ENCODE measurements at regions of chr21 and their contacts with region 1.

Region 1: DNA sequence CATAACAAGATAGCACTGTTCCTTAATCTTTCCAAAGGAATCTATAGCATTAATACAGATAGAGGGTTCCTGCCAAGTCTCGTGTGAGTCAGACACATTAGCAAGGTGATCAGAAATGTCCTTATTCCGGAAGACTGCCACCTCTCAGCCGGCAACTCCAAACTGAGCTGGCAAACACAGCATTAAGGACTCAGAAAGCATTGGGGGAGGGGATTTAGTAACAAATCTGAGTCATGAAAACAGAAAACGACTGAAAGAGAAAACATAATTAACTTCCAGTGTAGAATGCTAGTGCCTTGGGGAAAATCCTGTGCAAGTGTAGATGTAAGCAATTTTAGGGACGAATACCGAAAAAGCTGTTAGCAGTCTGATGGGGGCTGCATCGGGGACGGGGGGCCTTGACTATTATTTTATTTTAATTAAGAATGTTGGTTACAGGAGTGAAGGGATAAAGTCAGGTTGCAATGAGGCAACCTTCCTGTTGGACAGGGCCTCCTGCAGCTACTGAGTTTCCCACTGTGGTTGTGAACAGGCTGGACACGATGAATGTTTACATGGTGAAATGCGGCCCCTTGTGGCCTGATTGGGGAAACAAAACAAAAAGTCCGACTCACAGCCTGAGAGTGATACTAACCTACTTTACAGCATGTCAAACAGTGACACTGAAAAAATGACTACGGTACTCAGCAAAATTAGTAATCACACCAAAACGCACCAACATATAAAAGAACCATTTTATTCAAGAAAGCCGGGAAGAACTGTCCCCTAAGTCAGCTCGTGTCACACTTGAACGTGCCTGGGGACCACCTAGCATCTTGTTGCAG is 20.7 kb downstream of the MIS18A start:
- DNase-seq: peak in 3 of 9 donors; percentile 5 to 33 (median 8)
- ATAC-seq: peak; percentile 40
- H3K4me3 ChIP-seq: no peak overlapping the region
- H3K4me3 Mint-ChIP-seq: no peak overlapping the region
- H3K27ac ChIP-seq: no peak overlapping the region
- H3K27ac Mint-ChIP-seq: no peak overlapping the region
- H3K4me1 ChIP-seq: no peaks in the 10 kb centered on the region
- H3K4me1 Mint-ChIP-seq: peaks cover 0 to 2% (median 0%) of the 10 kb centered on the region in 7 donors
- H3K27me3 ChIP-seq: no peaks in the 10 kb centered on the region
- H3K27me3 Mint-ChIP-seq: peaks cover 0 to 12% (median 3%) of the 10 kb centered on the region in 5 donors

Region 2: GRCh38 chr21:31781737-31782136 is 476.4 kb before region 1 on chr21:
- CTCF ChIA-PET with region 1: interaction called, 3 read pairs
- POLR2A ChIA-PET with region 1: no interaction called
- intact Hi-C with region 1: loop called in 1 of 2 experiments (anchors 2 kb)
- DNase-seq: no peak
- ATAC-seq: no peak
- H3K4me3 ChIP-seq: no peak overlapping the region
- H3K4me3 Mint-ChIP-seq: no peak overlapping the region
- H3K27ac ChIP-seq: no peak overlapping the region
- H3K27ac Mint-ChIP-seq: no peak overlapping the region
- H3K4me1 ChIP-seq: no peaks in the 10 kb centered on the region
- H3K4me1 Mint-ChIP-seq: peaks cover 3 to 11% (median 4%) of the 10 kb centered on the region in 7 donors
- H3K27me3 ChIP-seq: no peaks in the 10 kb centered on the region
- H3K27me3 Mint-ChIP-seq: peaks cover 0 to 17% (median 13%) of the 10 kb centered on the region in 5 donors

Region 3: GRCh38 chr21:31866077-31866511 is 392.1 kb before region 1 on chr21:
- CTCF ChIA-PET with region 1: no interaction called
- POLR2A ChIA-PET with region 1: no interaction called
- intact Hi-C with region 1: loop called in 1 of 2 experiments (anchors 1 kb)
- DNase-seq: peak; percentile 16 to 70 (median 47)
- ATAC-seq: peak; percentile 72
- H3K4me3 ChIP-seq: no peak overlapping the region
- H3K4me3 Mint-ChIP-seq: no peak overlapping the region
- H3K27ac ChIP-seq: no peak overlapping the region
- H3K27ac Mint-ChIP-seq: no peak overlapping the region
- H3K4me1 ChIP-seq: no peaks in the 10 kb centered on the region
- H3K4me1 Mint-ChIP-seq: no peaks in the 10 kb centered on the region
- H3K27me3 ChIP-seq: no peaks in the 10 kb centered on the region
- H3K27me3 Mint-ChIP-seq: peaks cover 13 to 30% (median 23%) of the 10 kb centered on the region in 5 donors

Region 4: DNA sequence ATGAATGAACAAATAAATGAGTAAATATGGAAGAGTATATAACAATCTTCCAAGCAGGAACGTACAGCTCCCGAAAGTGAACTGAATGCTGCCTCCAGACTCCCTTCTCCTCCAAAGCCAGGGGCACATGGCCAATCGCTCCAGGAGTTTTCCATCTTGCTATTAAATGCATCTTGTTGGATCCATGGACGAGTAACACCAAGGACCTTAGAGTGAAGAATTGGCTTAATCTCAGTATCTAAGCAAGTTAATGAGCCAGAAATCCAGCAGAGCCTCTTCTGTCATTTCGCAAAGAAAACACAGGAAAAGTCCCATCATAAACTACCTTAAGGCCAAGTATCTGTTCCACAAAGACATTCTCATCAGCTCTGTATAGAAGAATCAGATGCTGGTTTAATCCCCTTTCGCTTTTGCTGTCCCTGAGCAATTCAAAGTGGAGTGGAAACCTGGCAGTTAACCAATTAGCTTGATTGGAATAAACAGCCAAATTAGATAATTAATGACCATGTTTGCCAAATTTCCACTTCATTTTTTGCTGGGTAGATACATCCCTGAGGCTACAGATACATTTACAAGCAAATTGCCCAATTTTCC is 95.3 kb before region 1 on chr21:
- CTCF ChIA-PET with region 1: no interaction called
- POLR2A ChIA-PET with region 1: no interaction called
- intact Hi-C with region 1: no loop called
- DNase-seq: no peak
- ATAC-seq: no peak
- H3K4me3 ChIP-seq: no peak overlapping the region
- H3K4me3 Mint-ChIP-seq: no peak overlapping the region
- H3K27ac ChIP-seq: no peak overlapping the region
- H3K27ac Mint-ChIP-seq: no peak overlapping the region
- H3K4me1 ChIP-seq: no peaks in the 10 kb centered on the region
- H3K4me1 Mint-ChIP-seq: no peaks in the 10 kb centered on the region
- H3K27me3 ChIP-seq: no peaks in the 10 kb centered on the region
- H3K27me3 Mint-ChIP-seq: peaks cover 16 to 61% (median 53%) of the 10 kb centered on the region in 5 donors

Region 5: DNA sequence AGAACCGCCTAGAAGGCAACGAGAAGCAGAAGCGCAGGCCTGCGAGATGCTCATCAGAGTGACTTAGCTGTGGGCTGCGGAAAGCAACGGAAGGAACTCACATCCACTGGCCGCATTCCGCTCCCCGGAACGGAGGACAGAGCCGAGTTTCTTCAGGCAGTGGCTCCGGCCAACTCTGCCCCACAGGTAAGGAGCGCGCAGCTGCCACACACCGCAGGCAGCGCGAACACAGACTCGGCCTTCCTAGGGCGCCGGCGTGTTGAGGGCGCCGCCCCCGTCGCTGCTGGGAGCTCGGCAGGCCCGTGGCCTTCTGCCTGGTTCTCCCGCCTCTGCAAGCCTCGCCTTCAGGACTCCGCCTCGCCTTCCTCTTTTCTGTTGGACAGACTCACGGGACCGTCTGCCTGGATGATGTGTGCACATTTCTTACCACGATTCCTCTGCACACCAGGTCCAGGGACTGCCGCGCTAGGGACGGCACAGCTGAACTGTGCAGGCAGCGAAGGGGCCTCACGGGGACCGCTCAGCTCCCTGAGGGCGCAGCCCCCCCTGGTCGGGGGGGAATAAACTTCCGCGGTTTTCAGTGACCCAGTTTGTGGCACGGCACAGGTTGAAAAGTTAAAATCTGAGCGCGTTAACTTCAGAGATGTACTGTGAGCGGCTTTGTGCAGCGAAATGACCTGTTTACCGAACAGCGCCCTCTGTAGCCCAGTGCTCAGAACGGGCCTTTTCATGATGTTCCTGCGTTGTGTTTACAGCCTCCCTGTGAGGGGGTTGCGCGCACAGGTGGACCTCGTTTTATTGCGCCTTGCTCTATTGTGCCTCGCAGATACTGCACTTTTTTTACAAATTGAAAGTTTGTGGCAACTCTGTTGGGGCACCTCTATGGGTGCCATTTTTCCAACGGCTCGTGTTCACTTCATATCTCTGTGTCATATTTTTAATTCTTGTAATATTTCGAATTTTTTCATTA is 311.4 kb after region 1 on chr21:
- CTCF ChIA-PET with region 1: no interaction called
- POLR2A ChIA-PET with region 1: no interaction called
- intact Hi-C with region 1: no loop called
- DNase-seq: peak; percentile 56 to 80 (median 75)
- ATAC-seq: peak; percentile 96
- H3K4me3 ChIP-seq: peak overlapping the region; percentile 85
- H3K4me3 Mint-ChIP-seq: peak overlapping the region; percentile 82 to 95 (median 90)
- H3K27ac ChIP-seq: peak overlapping the region; percentile 65
- H3K27ac Mint-ChIP-seq: peak overlapping the region; percentile 46 to 90 (median 75)
- H3K4me1 ChIP-seq: peaks cover 5 to 7% of the 10 kb centered on the region in 2 donors
- H3K4me1 Mint-ChIP-seq: peaks cover 6 to 20% (median 17%) of the 10 kb centered on the region in 7 donors
- H3K27me3 ChIP-seq: no peaks in the 10 kb centered on the region
- H3K27me3 Mint-ChIP-seq: peaks cover 0 to 8% (median 0%) of the 10 kb centered on the region in 5 donors

Measured in naive thymus-derived CD4-positive, alpha-beta T cell (primary cell).